Gastrocnemius medialis (tissue), 4 donors: ENCODE measurements at regions of chr3 and their contacts with region 1.

Region 1: GRCh38 chr3:122824465-122825381 is 29.9 kb downstream of the SLC49A4 start:
- DNase-seq: no peak
- ATAC-seq: peak; percentile 64 to 94
- H3K4me3 ChIP-seq: no peak overlapping the region
- H3K27ac ChIP-seq: peak overlapping the region; percentile 72 to 79 (median 75)
- H3K4me1 ChIP-seq: peaks cover 18 to 25% of the 10 kb centered on the region in 2 donors
- H3K27me3 ChIP-seq: no peaks in the 10 kb centered on the region
- CTCF ChIP-seq: no peak
- POLR2A ChIP-seq: peak in 1 of 2 donors; percentile 18

Region 2: GRCh38 chr3:122793568-122794416 is 30.9 kb before region 1 on chr3 and contains the start of gene HSPBAP1:
- in situ Hi-C with region 1: no loop called
- intact Hi-C with region 1: loop called (anchors 2 kb)
- DNase-seq: peak; percentile 94 to 96
- ATAC-seq: peak; percentile 76 to 84
- H3K4me3 ChIP-seq: peak within 1 kb of the TSS; percentile 74 to 90 (median 78)
- H3K27ac ChIP-seq: peak within 1 kb of the TSS; percentile 95 to 99 (median 96)
- H3K4me1 ChIP-seq: peaks cover 55 to 56% of the 10 kb centered on the region in 2 donors
- H3K27me3 ChIP-seq: no peaks in the 10 kb centered on the region
- CTCF ChIP-seq: peak in 2 of 5 experiments; percentile 39 to 50
- POLR2A ChIP-seq: peak; percentile 96
- total RNA-seq, gene HSPBAP1: 14.5 to 30.7 (median 17.0) TPM

Region 3: DNA sequence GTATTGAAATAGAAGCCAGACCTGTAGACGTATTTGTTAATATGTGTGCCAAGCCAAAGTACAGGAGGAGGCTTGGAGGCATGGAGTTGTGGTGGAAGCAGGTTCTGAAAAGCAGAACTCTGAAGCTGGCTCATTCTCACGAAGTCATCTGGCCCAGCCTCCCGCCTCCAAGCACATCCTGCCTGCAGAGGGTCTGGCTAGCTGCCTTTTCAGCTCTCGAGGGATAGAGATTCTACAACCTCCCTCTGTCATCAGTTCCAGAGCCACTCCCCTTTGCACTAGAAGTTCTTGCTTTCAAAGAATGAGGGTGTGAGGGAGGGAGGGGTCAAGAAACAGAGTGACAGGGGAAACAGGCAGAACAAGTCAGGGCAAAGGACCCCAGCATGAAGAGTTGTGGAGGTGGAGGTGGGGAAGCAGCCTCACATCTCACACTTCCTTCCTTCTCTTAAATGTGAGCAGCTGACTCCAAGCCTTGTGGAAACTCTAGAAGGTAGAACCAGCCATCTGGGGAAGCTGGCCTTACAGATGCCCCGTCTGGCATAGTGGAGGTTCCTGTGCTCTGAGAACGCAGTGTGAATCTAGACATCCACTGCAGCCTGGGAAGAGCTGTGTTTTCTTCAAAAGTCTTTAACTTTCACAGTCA is 65.5 kb after region 1 on chr3:
- in situ Hi-C with region 1: no loop called
- intact Hi-C with region 1: loop called (anchors 10 kb)
- DNase-seq: peak; percentile 54 to 57
- ATAC-seq: peak; percentile 26 to 44
- H3K4me3 ChIP-seq: no peak overlapping the region
- H3K27ac ChIP-seq: peak overlapping the region in 2 of 4 donors; percentile 34 to 60
- H3K4me1 ChIP-seq: peaks cover 43 to 44% of the 10 kb centered on the region in 2 donors
- H3K27me3 ChIP-seq: no peaks in the 10 kb centered on the region
- CTCF ChIP-seq: no peak
- POLR2A ChIP-seq: no peak